SK-N-SH (cell line): ENCODE measurements at regions of chr1 and their contacts with region 1.

Region 1: GRCh38 chr1:201703621-201704439 is 125.1 kb upstream of the IPO9 start:
- DNase-seq: peak; percentile 88
- H3K4me3 ChIP-seq: no peak overlapping the region; a peak in 1 of 4 replicates
- H3K27ac ChIP-seq: peak overlapping the region; percentile 77 to 98
- H3K4me1 ChIP-seq: peaks cover 28 to 45% of the 10 kb centered on the region in 2 experiments
- H3K27me3 ChIP-seq: no peaks in the 10 kb centered on the region
- CTCF ChIP-seq: peak; percentile 96
- EP300 ChIP-seq: no peak
- RAD21 ChIP-seq: peak; percentile 97

Region 2: DNA sequence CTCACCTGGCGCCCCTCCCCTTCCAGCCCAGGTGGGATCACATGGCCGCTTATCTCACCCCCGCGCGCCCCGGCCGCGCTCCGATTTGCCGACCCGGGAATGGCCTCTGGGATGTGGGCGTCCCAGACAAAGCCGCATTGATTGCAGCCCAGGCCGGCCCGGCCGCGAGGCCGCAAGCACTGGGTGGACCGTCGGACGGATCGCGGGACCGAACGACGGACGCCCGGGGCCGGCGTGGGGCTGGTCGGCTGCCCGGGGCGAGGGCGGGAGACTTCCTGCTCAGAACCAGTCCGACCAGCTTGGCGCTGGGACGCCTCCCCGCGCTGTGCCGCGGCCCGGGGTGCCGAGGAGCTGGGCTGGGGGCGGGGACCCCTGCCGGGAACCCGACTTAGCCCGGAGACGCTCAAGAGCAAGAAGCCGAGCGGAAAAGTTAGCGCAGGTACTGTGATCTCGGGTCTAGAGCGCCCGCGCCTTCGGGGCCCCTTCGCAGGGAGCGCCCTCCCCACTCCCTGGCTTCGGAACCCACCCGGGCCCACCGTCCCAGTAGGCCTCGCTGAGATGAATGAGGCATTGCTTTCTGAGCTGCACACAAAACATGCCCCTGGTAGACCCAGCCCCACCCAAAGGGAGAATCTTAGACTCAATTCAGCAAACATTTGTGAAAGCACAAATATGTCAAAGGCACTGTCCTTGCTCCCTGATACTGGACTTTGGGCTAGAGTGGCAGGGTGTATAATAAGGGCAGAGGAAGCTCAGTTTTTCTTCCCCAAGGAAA is 304.3 kb before region 1 on chr1:
- CTCF ChIA-PET with region 1: no interaction called
- POLR2A ChIA-PET with region 1: no interaction called
- DNase-seq: no peak
- H3K4me3 ChIP-seq: no peak overlapping the region
- H3K27ac ChIP-seq: no peak overlapping the region
- H3K4me1 ChIP-seq: peaks cover 0 to 9% of the 10 kb centered on the region in 2 experiments; a peak in 1 of 4 replicates
- H3K27me3 ChIP-seq: peaks cover 35% of the 10 kb centered on the region; the same call in 1 of the 2 replicates
- CTCF ChIP-seq: no peak
- EP300 ChIP-seq: no peak
- RAD21 ChIP-seq: no peak

Region 3: GRCh38 chr1:201545851-201546492 is 157.9 kb before region 1 on chr1:
- CTCF ChIA-PET with region 1: interaction called, 196 read pairs
- POLR2A ChIA-PET with region 1: no interaction called
- DNase-seq: peak; percentile 35
- H3K4me3 ChIP-seq: no peak overlapping the region
- H3K27ac ChIP-seq: no peak overlapping the region; a peak in 1 of 4 replicates
- H3K4me1 ChIP-seq: peaks cover 15 to 36% of the 10 kb centered on the region in 2 experiments
- H3K27me3 ChIP-seq: no peaks in the 10 kb centered on the region
- CTCF ChIP-seq: peak; percentile 23
- EP300 ChIP-seq: no peak
- RAD21 ChIP-seq: no peak

Region 4: GRCh38 chr1:201551877-201552731 is 151.7 kb before region 1 on chr1:
- CTCF ChIA-PET with region 1: interaction called, 397 read pairs
- POLR2A ChIA-PET with region 1: no interaction called
- DNase-seq: no peak
- H3K4me3 ChIP-seq: 0 out of 4 replicates have a peak overlapping the region, but pooled peaks of 1 of the 2 experiments have one; percentile 1
- H3K27ac ChIP-seq: peak overlapping the region; percentile 66 to 95
- H3K4me1 ChIP-seq: peaks cover 36 to 53% of the 10 kb centered on the region in 2 experiments
- H3K27me3 ChIP-seq: no peaks in the 10 kb centered on the region
- CTCF ChIP-seq: no peak
- EP300 ChIP-seq: peak in 1 of 2 experiments; percentile 50; a peak in 1 of 4 replicates
- RAD21 ChIP-seq: no peak

Region 5: GRCh38 chr1:201582705-201583442 is 121.0 kb before region 1 on chr1:
- CTCF ChIA-PET with region 1: interaction called, 17 read pairs
- POLR2A ChIA-PET with region 1: interaction called, 3 read pairs
- DNase-seq: peak; percentile 56
- H3K4me3 ChIP-seq: no peak overlapping the region
- H3K27ac ChIP-seq: peak overlapping the region; percentile 29 to 88; a peak in 3 of 4 replicates
- H3K4me1 ChIP-seq: peaks cover 19 to 44% of the 10 kb centered on the region in 2 experiments
- H3K27me3 ChIP-seq: no peaks in the 10 kb centered on the region
- CTCF ChIP-seq: no peak
- EP300 ChIP-seq: no peak
- RAD21 ChIP-seq: no peak

Region 6: DNA sequence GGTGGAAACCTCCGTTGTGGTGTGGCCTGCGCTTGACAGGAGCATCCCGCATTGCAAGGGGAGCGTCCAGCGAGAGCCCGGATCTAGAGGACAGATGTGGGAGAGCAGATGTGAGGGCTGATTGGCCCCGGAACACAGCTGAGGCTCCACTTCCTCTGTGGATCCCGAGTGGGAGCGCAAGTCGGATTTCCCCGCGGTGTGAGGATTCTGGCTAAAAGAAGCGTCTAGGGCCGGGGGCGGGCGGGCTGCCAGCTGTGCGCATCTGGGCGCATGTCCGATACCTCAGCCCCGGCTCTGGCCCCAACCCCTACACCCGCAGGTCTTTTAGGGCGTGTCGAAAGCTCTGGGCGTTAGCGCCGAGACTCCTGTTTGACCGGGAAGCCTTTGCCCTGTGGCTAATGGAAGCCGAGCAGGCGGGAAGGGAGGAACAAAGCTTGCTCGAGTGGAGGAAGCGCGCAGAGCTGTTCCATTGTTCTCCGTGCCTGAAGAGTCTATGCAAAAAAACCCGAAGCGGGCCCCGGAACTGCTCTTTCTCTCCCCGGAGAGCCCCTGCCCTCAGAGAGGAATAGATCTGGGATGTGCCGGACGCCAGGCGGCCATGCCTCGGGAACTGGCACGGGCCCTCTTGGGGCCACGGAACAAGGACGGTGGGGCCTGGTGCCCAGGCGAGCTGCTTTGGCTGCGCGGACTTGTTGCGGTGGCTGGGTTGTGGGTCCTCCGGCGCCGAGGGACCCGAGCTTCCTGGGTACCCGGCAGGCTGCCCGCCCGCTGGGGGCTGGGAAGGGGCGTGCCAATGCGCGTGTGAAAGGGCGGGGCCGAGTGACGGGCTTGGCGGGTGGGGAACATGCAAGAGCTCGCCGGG is 53.8 kb before region 1 on chr1:
- CTCF ChIA-PET with region 1: interaction called, 33 read pairs
- POLR2A ChIA-PET with region 1: interaction called, 6 read pairs
- DNase-seq: peak; percentile 85
- H3K4me3 ChIP-seq: peak overlapping the region; percentile 55 to 63
- H3K27ac ChIP-seq: peak overlapping the region; percentile 50 to 85; a peak in 3 of 4 replicates
- H3K4me1 ChIP-seq: peaks cover 48 to 63% of the 10 kb centered on the region in 2 experiments
- H3K27me3 ChIP-seq: no peaks in the 10 kb centered on the region
- CTCF ChIP-seq: no peak
- EP300 ChIP-seq: no peak
- RAD21 ChIP-seq: no peak

Region 7: DNA sequence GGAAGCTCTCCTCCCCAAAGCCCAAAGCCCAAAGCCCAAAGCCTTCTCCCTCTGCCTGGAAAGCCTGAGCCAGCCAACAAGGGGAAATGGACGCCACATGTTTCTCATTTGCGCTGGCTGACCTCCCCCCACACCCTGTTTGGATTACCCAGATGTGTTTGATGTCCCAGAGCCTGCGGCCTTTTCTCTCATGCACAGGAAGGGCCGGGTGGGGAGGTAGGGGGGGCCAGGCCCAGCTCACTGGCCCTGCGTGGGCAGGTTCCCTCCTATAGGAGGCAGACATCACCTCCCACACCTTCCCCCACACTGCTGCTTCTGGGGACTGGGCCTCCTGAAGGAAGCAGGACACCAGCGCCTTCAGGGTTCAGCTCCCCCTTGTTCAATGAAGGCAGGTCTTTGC is 48.6 kb before region 1 on chr1:
- CTCF ChIA-PET with region 1: interaction called, 33 read pairs
- POLR2A ChIA-PET with region 1: interaction called, 6 read pairs
- DNase-seq: peak; percentile 95
- H3K4me3 ChIP-seq: no peak overlapping the region; a peak in 1 of 4 replicates
- H3K27ac ChIP-seq: peak overlapping the region; percentile 63 to 94
- H3K4me1 ChIP-seq: peaks cover 58 to 61% of the 10 kb centered on the region in 2 experiments
- H3K27me3 ChIP-seq: no peaks in the 10 kb centered on the region
- CTCF ChIP-seq: peak; percentile 38
- EP300 ChIP-seq: peak; percentile 41 to 89; a peak in 3 of 4 replicates
- RAD21 ChIP-seq: peak; percentile 51